Tibial artery (tissue), 4 donors: ENCODE measurements at regions of chr5 and their contacts with region 1.

Region 1: DNA sequence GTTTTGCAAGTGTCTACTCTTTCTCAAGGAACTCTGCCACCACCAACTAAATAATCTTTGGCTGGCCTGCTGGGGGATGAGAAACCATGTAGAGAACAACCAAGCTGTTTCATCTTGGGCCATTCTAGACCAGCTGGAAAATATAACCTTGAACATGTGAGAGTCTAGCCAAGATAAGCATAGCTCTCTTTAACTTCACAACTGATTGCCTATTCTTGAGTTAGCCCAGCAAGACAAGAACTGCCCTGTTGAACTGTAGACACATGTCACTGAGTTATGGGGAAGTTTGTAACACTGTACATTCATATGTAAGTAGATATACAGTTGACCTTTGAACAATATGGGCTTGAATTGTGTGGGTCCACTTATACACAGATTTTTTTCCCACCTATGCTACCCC is 44.4 kb downstream of the NUP155 start:
- DNase-seq: no peak
- H3K4me3 ChIP-seq: no peak overlapping the region
- H3K27ac ChIP-seq: no peak overlapping the region
- H3K4me1 ChIP-seq: no peaks in the 10 kb centered on the region
- H3K27me3 ChIP-seq: no peaks in the 10 kb centered on the region
- CTCF ChIP-seq: no peak

Region 2: GRCh38 chr5:37029436-37029835 is 297.1 kb before region 1 on chr5:
- intact Hi-C with region 1: loop called (anchors 10 kb)
- DNase-seq: no peak
- H3K4me3 ChIP-seq: no peak overlapping the region
- H3K27ac ChIP-seq: no peak overlapping the region
- H3K4me1 ChIP-seq: no peaks in the 10 kb centered on the region
- H3K27me3 ChIP-seq: no peaks in the 10 kb centered on the region
- CTCF ChIP-seq: no peak

Region 3: GRCh38 chr5:37283214-37283820 is 43.2 kb before region 1 on chr5:
- intact Hi-C with region 1: no loop called
- DNase-seq: no peak
- H3K4me3 ChIP-seq: no peak overlapping the region
- H3K27ac ChIP-seq: no peak overlapping the region
- H3K4me1 ChIP-seq: no peaks in the 10 kb centered on the region
- H3K27me3 ChIP-seq: no peaks in the 10 kb centered on the region
- CTCF ChIP-seq: no peak